ENCODE measurements at regions of chr15 and their contacts with region 1.

Region 1: GRCh38 chr15:52256366-52256765 is 39.2 kb downstream of the MYO5C start:
- DNase-seq: peak; percentile 90
- H3K4me3 ChIP-seq: no peak overlapping the region
- H3K27ac ChIP-seq: no peak overlapping the region
- H3K4me1 ChIP-seq: peaks cover 33% of the 10 kb centered on the region
- H3K27me3 ChIP-seq: no peaks in the 10 kb centered on the region
- CTCF ChIP-seq: peak; percentile 69
- POLR2A ChIP-seq: no peak

Region 2: GRCh38 chr15:52103217-52104207 is 152.9 kb before region 1 on chr15:
- CTCF ChIA-PET with region 1: no interaction called
- POLR2A ChIA-PET with region 1: no interaction called
- dilution Hi-C with region 1: no loop called
- intact Hi-C with region 1: no loop called
- DNase-seq: peak; percentile 98
- H3K4me3 ChIP-seq: no peak overlapping the region
- H3K27ac ChIP-seq: peak overlapping the region; percentile 77
- H3K4me1 ChIP-seq: peaks cover 19% of the 10 kb centered on the region
- H3K27me3 ChIP-seq: no peaks in the 10 kb centered on the region
- CTCF ChIP-seq: no peak
- POLR2A ChIP-seq: no peak

Region 3: GRCh38 chr15:52171386-52171785 is 85.0 kb before region 1 on chr15:
- CTCF ChIA-PET with region 1: no interaction called
- POLR2A ChIA-PET with region 1: no interaction called
- dilution Hi-C with region 1: no loop called
- intact Hi-C with region 1: no loop called
- DNase-seq: peak; percentile 52
- H3K4me3 ChIP-seq: no peak overlapping the region
- H3K27ac ChIP-seq: no peak overlapping the region
- H3K4me1 ChIP-seq: no peaks in the 10 kb centered on the region
- H3K27me3 ChIP-seq: no peaks in the 10 kb centered on the region
- CTCF ChIP-seq: peak in 1 of 2 donors; percentile 23
- POLR2A ChIP-seq: no peak

Region 4: DNA sequence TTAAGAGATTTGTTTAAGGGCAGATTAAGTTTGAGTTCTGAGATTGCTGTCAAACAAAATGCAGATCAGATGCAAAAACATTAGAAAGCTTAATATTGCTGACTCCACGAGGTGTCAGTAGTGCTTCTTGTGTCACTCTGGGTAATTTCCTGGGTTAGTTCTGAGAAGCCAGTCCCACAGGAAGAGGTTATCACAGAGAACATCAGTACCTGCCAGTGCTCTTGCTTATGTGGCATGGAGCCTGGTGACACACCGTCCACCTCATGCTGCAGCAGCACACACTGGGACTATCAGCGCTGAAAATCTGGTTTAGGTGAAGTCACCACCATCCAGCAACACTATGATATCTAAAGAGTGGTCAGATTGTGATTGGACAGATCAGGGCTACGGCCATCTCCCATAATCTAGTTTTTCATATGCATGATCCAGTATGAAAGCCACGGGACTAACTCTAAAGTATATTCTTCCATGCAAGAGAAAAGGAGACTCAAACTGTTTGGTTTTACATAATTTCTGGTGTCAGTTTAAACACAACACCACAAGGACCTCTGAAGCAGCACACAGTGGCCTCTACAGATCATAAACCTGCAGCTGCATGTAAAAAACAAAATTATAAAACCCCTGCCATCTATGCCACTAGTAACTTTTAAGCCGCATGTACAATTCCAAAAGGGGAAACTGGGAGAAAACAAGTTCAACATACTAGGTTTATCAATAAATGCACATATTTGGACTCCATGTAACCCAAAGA is 75.3 kb after region 1 on chr15:
- CTCF ChIA-PET with region 1: interaction called, 16 read pairs
- POLR2A ChIA-PET with region 1: no interaction called
- dilution Hi-C with region 1: no loop called
- intact Hi-C with region 1: loop called (anchors 1 kb)
- DNase-seq: peak; percentile 68
- H3K4me3 ChIP-seq: no peak overlapping the region
- H3K27ac ChIP-seq: no peak overlapping the region
- H3K4me1 ChIP-seq: peaks cover 6% of the 10 kb centered on the region
- H3K27me3 ChIP-seq: no peaks in the 10 kb centered on the region
- CTCF ChIP-seq: peak; percentile 36 to 45
- POLR2A ChIP-seq: no peak

Region 5: GRCh38 chr15:52466134-52466701 is 209.9 kb after region 1 on chr15:
- CTCF ChIA-PET with region 1: interaction called, 6 read pairs
- POLR2A ChIA-PET with region 1: interaction called, 5 read pairs
- dilution Hi-C with region 1: no loop called
- intact Hi-C with region 1: loop called (anchors 1 kb)
- DNase-seq: no peak
- H3K4me3 ChIP-seq: no peak overlapping the region
- H3K27ac ChIP-seq: no peak overlapping the region
- H3K4me1 ChIP-seq: peaks cover 28% of the 10 kb centered on the region
- H3K27me3 ChIP-seq: no peaks in the 10 kb centered on the region
- CTCF ChIP-seq: no peak
- POLR2A ChIP-seq: no peak

Region 6: GRCh38 chr15:52528991-52529926 is 272.9 kb after region 1 on chr15:
- CTCF ChIA-PET with region 1: no interaction called
- POLR2A ChIA-PET with region 1: no interaction called
- dilution Hi-C with region 1: no loop called
- intact Hi-C with region 1: loop called (anchors 2 kb)
- DNase-seq: peak; percentile 75
- H3K4me3 ChIP-seq: peak overlapping the region; percentile 32 to 89 (median 58)
- H3K27ac ChIP-seq: no peak overlapping the region
- H3K4me1 ChIP-seq: peaks cover 17% of the 10 kb centered on the region
- H3K27me3 ChIP-seq: no peaks in the 10 kb centered on the region
- CTCF ChIP-seq: peak in 1 of 2 donors; percentile 11
- POLR2A ChIP-seq: no peak

Region 7: GRCh38 chr15:52679232-52680040 is 423.1 kb after region 1 on chr15 and contains the start of gene ATOSA:
- CTCF ChIA-PET with region 1: interaction called, 3 read pairs
- POLR2A ChIA-PET with region 1: no interaction called
- dilution Hi-C with region 1: no loop called
- intact Hi-C with region 1: loop called (anchors 2 kb)
- DNase-seq: peak; percentile 90
- H3K4me3 ChIP-seq: peak within 1 kb of the TSS; percentile 59 to 87 (median 80)
- H3K27ac ChIP-seq: peak within 1 kb of the TSS; percentile 92
- H3K4me1 ChIP-seq: peaks cover 18% of the 10 kb centered on the region
- H3K27me3 ChIP-seq: peaks cover 11 to 17% of the 10 kb centered on the region in 2 experiments
- CTCF ChIP-seq: no peak
- POLR2A ChIP-seq: no peak
- total RNA-seq, gene ATOSA: 39.1 and 41.1 TPM in 2 replicates

Measured in endothelial cell of umbilical vein (primary cell).